ENCODE measurements at regions of chr16 and their contacts with region 1.

Region 1: DNA sequence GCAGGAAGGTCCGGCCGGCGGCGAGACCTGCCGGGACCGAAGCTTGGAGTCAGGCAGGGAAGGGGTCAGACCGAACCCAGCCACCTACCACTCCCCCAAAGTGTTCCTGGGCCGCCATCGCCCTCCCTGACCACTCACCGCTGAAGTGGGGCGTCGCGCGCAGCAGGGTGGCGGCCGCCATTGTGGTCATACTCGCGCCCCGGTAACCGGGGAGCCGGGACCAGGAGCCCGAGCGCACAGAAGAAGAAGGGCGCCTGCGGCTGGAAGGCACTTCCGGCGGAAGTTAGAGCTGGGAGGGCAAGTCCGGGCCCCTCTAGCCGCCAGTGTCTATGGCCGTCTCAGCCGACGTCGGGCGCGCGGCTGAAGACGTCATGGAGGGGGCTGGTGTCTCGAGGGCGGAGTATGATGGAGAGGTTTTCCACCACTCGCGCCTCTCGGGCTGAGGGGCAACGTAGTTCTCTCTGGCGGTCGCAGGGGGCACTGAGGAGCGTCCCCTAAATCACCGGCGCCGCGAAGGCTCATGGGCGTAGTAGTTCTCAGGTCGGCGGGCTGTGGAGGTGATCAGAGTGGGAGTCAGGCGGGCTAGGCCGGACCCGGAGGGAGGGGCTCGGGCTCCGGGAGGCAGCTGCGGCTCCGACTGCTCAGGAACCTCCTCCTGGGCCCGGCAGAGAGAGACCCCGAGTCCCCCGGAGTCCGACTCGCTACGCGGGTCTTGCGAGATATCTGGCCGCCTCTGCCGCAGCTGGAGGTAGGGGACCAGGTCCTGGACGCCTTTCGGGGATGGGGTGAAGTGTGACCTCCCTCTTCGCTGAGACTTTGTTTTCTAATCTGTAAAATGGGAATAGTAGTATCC is at the start of gene TUFM:
- DNase-seq: peak; percentile 99
- H3K4me3 ChIP-seq: peak within 1 kb of the TSS; percentile 95
- H3K27ac ChIP-seq: peak within 1 kb of the TSS; percentile 50
- H3K4me1 ChIP-seq: peaks cover 17% of the 10 kb centered on the region
- CTCF ChIP-seq: peak; percentile 77
- total RNA-seq, gene TUFM: 160 and 184 TPM in 2 replicates

Region 2: DNA sequence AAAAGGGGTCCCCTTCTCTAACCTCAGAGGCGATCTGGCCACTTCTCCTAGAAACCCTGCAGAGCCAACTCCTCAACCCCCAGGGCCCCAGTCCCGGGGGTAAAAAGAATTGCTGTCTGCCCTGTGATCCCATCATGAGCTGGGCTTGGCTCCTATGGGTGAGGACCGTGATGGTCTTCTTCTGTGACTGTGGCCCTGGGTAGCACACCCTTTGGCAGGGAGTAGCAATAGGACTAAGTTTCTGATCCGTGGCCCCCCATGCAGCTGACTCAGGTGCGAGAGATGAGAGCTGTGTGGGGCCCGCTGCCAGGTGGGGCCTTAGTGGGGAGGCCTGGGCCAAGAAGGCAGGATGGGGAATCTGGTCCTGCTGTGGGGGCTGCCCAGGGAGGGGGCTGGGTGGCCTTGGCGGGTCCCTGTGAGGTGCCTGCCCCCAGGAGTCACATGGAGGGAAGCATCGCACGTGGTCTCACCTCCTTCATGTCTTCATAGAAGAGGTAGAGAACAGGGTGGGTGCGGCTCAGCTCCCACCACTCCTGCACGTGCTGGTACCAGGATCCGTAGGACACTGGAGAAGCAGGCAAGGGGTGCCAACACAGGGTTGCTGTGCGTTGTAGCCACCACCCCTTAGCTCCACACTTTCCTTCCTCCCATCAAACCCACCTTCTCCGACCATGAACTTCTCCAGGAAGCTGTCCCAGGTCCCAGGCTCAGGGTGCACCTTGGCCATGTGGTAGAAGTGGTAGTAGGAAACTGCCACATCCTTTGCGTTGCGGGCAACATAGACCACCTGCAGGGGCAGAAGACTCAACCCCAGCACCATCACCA is 239.8 kb before region 1 on chr16:
- CTCF ChIA-PET with region 1: no interaction called
- POLR2A ChIA-PET with region 1: no interaction called
- intact Hi-C with region 1: no loop called
- DNase-seq: no peak
- H3K4me3 ChIP-seq: no peak overlapping the region
- H3K27ac ChIP-seq: no peak overlapping the region
- H3K4me1 ChIP-seq: peaks cover 16% of the 10 kb centered on the region
- CTCF ChIP-seq: no peak

Region 3: GRCh38 chr16:28863929-28864793 is 17.9 kb after region 1 on chr16:
- CTCF ChIA-PET with region 1: interaction called, 3 read pairs
- POLR2A ChIA-PET with region 1: interaction called, 17 read pairs
- intact Hi-C with region 1: no loop called
- DNase-seq: no peak
- H3K4me3 ChIP-seq: peak overlapping the region; percentile 97
- H3K27ac ChIP-seq: peak overlapping the region; percentile 81
- H3K4me1 ChIP-seq: peaks cover 19% of the 10 kb centered on the region
- CTCF ChIP-seq: no peak